Activated T-helper 1 cell treated with anti-CD3 and anti-CD28 coated beads, Interleukin-12 subunit alpha, Interleukin-12 subunit beta, Interleukin-2, Interleukin-4 antibody, amounts not matched to agents 30 ng/mL and 10 ng/mL and 1 ng/mL, durations not matched to agents 14 hours and 24 hours and 36 hours (primary cell): ENCODE measurements at regions of chr15 and their contacts with region 1.

Region 1: DNA sequence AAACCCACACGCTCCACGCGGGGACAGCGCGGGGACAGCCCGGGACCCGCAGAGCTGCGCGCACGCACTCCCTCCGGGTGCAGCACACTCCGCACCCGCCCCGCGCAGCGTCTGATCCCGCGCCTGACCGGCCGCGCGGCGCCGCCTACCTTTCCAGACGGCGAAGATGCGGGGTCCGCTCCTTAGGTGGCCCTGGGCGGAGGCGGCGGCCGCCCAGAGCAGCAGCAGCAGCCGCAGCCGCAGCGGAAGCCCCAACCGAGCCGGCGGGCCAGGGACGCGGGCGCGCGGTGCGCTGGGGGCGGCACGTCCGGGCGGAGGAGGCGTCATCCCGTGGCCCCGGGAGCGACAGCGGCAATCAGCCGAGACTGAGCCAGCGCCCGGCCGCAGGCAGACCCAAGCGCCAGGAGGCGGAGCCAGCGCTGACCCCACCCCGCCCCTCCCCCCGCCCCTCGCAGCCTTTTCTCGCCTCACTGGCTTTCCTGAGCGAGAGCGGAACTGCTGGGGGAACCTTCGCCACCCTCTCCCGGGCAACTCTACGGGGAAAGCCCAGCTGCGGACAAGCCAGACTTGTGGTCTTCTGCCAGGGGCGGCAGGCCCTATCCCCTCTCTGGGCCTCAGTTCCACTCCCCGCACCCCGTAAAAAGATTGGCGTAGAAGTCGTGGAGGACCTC is at the start of gene SEMA7A:
- DNase-seq: peak; percentile 82
- H3K4me3 Mint-ChIP-seq: peak within 1 kb of the TSS; percentile 97
- H3K27ac Mint-ChIP-seq: peak within 1 kb of the TSS; percentile 87
- H3K4me1 Mint-ChIP-seq: peaks cover 79% of the 10 kb centered on the region
- H3K27me3 Mint-ChIP-seq: no peaks in the 10 kb centered on the region
- total RNA-seq, gene SEMA7A: 102 TPM in 2 replicates

Region 2: GRCh38 chr15:73950831-73951561 is 482.7 kb before region 1 on chr15:
- intact Hi-C with region 1: no loop called
- DNase-seq: peak; percentile 56
- H3K4me3 Mint-ChIP-seq: no peak overlapping the region
- H3K27ac Mint-ChIP-seq: no peak overlapping the region
- H3K4me1 Mint-ChIP-seq: peaks cover 5% of the 10 kb centered on the region
- H3K27me3 Mint-ChIP-seq: peaks cover 3% of the 10 kb centered on the region

Region 3: GRCh38 chr15:74402873-74403587 is 30.7 kb before region 1 on chr15:
- intact Hi-C with region 1: loop called (anchors 1 kb)
- DNase-seq: peak; percentile 70
- H3K4me3 Mint-ChIP-seq: peak overlapping the region; percentile 75
- H3K27ac Mint-ChIP-seq: peak overlapping the region; percentile 85
- H3K4me1 Mint-ChIP-seq: peaks cover 89% of the 10 kb centered on the region
- H3K27me3 Mint-ChIP-seq: no peaks in the 10 kb centered on the region

Region 4: GRCh38 chr15:74489518-74490338 is 56.0 kb after region 1 on chr15:
- intact Hi-C with region 1: loop called (anchors 1 kb)
- DNase-seq: peak; percentile 63
- H3K4me3 Mint-ChIP-seq: no peak overlapping the region
- H3K27ac Mint-ChIP-seq: peak overlapping the region; percentile 64
- H3K4me1 Mint-ChIP-seq: peaks cover 13% of the 10 kb centered on the region
- H3K27me3 Mint-ChIP-seq: no peaks in the 10 kb centered on the region

Region 5: DNA sequence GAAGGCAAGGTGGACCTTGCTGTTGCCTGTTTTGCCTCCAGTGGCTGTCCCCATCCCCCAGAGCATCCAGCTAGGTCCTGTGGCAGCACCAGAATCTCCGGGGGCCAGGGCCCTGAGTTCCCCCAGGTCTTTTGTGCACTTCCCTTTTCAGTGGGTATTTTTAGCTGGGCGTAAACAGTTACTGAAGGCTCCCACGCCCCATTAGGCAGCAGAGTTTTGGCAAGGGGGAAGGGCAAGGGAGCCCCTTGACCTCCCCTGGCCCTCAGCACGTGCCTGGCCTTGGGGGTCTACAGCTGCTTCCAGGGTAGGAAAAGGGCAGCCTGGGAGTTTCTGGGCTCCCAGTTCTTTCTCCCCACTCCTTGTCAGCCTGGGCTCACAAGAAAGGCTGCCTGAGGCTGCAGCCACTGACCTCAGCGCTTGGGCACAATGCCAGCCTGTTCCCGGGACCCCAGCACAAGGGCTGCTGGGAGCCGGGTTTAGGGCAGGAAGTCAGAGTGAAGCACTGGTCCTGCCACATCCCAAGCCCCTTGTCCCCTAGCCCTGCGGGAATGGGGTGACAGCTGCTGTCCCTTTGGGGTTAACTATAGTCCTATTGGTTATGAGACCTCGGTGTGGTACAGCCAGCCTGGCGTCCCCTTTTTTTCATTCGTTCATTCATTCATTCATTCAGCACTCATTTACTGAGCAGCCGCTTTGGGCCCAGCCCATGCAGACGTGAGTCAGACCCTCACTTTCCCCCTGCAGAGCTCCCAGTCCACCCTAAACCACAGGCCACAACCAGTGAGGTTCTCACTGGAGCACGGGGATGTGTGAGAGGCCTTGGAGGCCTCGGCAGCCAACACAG is 356.6 kb after region 1 on chr15:
- intact Hi-C with region 1: no loop called
- DNase-seq: no peak
- H3K4me3 Mint-ChIP-seq: peak overlapping the region; percentile 86
- H3K27ac Mint-ChIP-seq: peak overlapping the region; percentile 98
- H3K4me1 Mint-ChIP-seq: peaks cover 82% of the 10 kb centered on the region
- H3K27me3 Mint-ChIP-seq: no peaks in the 10 kb centered on the region